Right cardiac atrium (tissue), 5 donors: ENCODE measurements at regions of chr18 and their contacts with region 1.

Region 1: GRCh38 chr18:499551-500408 is 721 bp downstream of the COLEC12 start:
- DNase-seq: peak in 2 of 3 donors; percentile 19 to 61
- ATAC-seq: peak; percentile 36 to 40
- H3K4me3 ChIP-seq: peak overlapping the region; percentile 49
- H3K27ac ChIP-seq: no peak overlapping the region
- H3K4me1 ChIP-seq: no peaks in the 10 kb centered on the region
- H3K27me3 ChIP-seq: no peaks in the 10 kb centered on the region

Region 2: GRCh38 chr18:323253-323622 is 176.5 kb before region 1 on chr18:
- intact Hi-C with region 1: loop called in 1 of 4 experiments (anchors 10 kb)
- DNase-seq: no peak
- ATAC-seq: peak; percentile 63 to 80
- H3K4me3 ChIP-seq: no peak overlapping the region
- H3K27ac ChIP-seq: no peak overlapping the region
- H3K4me1 ChIP-seq: peaks cover 5% of the 10 kb centered on the region
- H3K27me3 ChIP-seq: no peaks in the 10 kb centered on the region

Region 3: GRCh38 chr18:457140-457519 is 42.6 kb before region 1 on chr18:
- intact Hi-C with region 1: loop called in 1 of 4 experiments (anchors 10 kb)
- DNase-seq: peak; percentile 50 to 80 (median 80)
- ATAC-seq: peak; percentile 89 to 90
- H3K4me3 ChIP-seq: peak overlapping the region; percentile 14
- H3K27ac ChIP-seq: peak overlapping the region; percentile 40
- H3K4me1 ChIP-seq: no peaks in the 10 kb centered on the region
- H3K27me3 ChIP-seq: no peaks in the 10 kb centered on the region

Region 4: DNA sequence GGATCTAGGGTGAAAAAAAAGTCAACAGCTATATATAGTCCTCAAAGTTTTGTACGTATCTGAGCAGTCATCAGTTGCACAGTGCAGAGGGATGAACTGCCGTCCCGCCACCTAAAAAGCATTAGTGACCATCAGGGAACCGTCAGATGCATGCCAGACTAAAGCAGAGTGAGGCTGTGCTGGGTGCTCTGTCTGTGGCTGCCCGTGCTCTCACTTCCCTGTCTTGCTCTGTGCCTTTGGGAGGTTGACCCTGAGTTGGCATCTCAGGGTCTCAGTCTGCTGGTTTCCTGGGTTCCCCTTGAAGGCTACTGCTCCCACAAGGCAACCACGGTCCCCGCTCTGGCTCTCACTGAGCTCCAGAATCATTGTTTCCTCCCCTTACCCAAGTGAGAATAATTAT is 108.2 kb after region 1 on chr18:
- intact Hi-C with region 1: loop called in 1 of 4 experiments (anchors 10 kb)
- DNase-seq: peak in 1 of 3 donors; percentile 42
- ATAC-seq: no peak
- H3K4me3 ChIP-seq: no peak overlapping the region
- H3K27ac ChIP-seq: no peak overlapping the region
- H3K4me1 ChIP-seq: peaks cover 4% of the 10 kb centered on the region
- H3K27me3 ChIP-seq: no peaks in the 10 kb centered on the region